Esophagus muscularis mucosa (tissue), 4 donors: ENCODE measurements at regions of chrX and their contacts with region 1.

Region 1: GRCh38 chrX:68807818-68808217 is 21.0 kb upstream of the EFNB1 start:
- DNase-seq: no peak
- H3K4me3 ChIP-seq: no peak overlapping the region
- H3K27ac ChIP-seq: no peak overlapping the region
- H3K4me1 ChIP-seq: peaks cover 0 to 2% (median 0%) of the 10 kb centered on the region in 4 donors
- H3K27me3 ChIP-seq: no peaks in the 10 kb centered on the region
- CTCF ChIP-seq: peak; percentile 36 to 56 (median 43)
- EP300 ChIP-seq: no peak
- POLR2A ChIP-seq: no peak

Region 2: DNA sequence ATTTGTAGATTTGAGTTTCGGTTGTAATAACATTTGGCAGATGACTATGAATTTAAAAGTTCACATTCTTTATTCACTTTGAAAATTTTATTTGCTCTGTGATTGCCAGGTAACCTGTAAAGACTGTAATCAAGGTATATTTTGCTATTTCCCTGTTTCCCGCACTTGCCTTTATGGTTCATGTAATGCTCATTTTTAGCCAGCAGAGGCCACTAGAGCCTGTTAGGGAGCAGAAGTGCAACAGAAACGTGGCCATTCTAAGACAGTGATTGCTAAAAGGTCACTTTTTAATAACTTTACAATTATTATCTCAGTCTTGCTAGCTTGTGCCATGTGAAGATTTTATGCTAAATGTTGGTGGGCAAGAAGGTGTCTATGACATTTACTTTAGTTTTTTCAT is 296.6 kb before region 1 on chrX:
- intact Hi-C with region 1: loop called (anchors 5 kb)
- DNase-seq: no peak
- H3K4me3 ChIP-seq: no peak overlapping the region
- H3K27ac ChIP-seq: no peak overlapping the region
- H3K4me1 ChIP-seq: peaks cover 0 to 14% (median 4%) of the 10 kb centered on the region in 4 donors
- H3K27me3 ChIP-seq: no peaks in the 10 kb centered on the region
- CTCF ChIP-seq: peak; percentile 70 to 75 (median 74)
- EP300 ChIP-seq: no peak
- POLR2A ChIP-seq: no peak

Region 3: GRCh38 chrX:68732906-68733493 is 74.8 kb before region 1 on chrX:
- intact Hi-C with region 1: loop called (anchors 5 kb)
- DNase-seq: no peak
- H3K4me3 ChIP-seq: no peak overlapping the region
- H3K27ac ChIP-seq: no peak overlapping the region
- H3K4me1 ChIP-seq: peaks cover 0 to 6% (median 2%) of the 10 kb centered on the region in 4 donors
- H3K27me3 ChIP-seq: no peaks in the 10 kb centered on the region
- CTCF ChIP-seq: peak; percentile 63 to 80 (median 66)
- EP300 ChIP-seq: no peak
- POLR2A ChIP-seq: no peak